ENCODE measurements at regions of chr11 and their contacts with region 1.

Region 1: GRCh38 chr11:118870396-118871345 is 13.0 kb upstream of the CXCR5 start:
- DNase-seq: peak; percentile 66
- ATAC-seq: peak; percentile 37
- H3K4me3 Mint-ChIP-seq: peak overlapping the region; percentile 51
- H3K27ac Mint-ChIP-seq: peak overlapping the region; percentile 92
- H3K4me1 Mint-ChIP-seq: peaks cover 55% of the 10 kb centered on the region
- H3K27me3 Mint-ChIP-seq: no peaks in the 10 kb centered on the region

Region 2: GRCh38 chr11:118845369-118845768 is 25.3 kb before region 1 on chr11:
- CTCF ChIA-PET with region 1: interaction called, 11 read pairs
- DNase-seq: peak; percentile 50
- ATAC-seq: peak; percentile 55
- H3K4me3 Mint-ChIP-seq: no peak overlapping the region
- H3K27ac Mint-ChIP-seq: peak overlapping the region; percentile 74
- H3K4me1 Mint-ChIP-seq: peaks cover 35% of the 10 kb centered on the region
- H3K27me3 Mint-ChIP-seq: peaks cover 2% of the 10 kb centered on the region

Region 3: GRCh38 chr11:118885319-118885718 is 14.6 kb after region 1 on chr11:
- CTCF ChIA-PET with region 1: no interaction called
- DNase-seq: no peak
- ATAC-seq: no peak
- H3K4me3 Mint-ChIP-seq: no peak overlapping the region
- H3K27ac Mint-ChIP-seq: no peak overlapping the region
- H3K4me1 Mint-ChIP-seq: peaks cover 19% of the 10 kb centered on the region
- H3K27me3 Mint-ChIP-seq: peaks cover 11% of the 10 kb centered on the region

Region 4: GRCh38 chr11:118895142-118896039 is 24.7 kb after region 1 on chr11:
- CTCF ChIA-PET with region 1: interaction called, 15 read pairs
- DNase-seq: peak; percentile 68
- ATAC-seq: peak; percentile 60
- H3K4me3 Mint-ChIP-seq: no peak overlapping the region
- H3K27ac Mint-ChIP-seq: peak overlapping the region; percentile 73
- H3K4me1 Mint-ChIP-seq: peaks cover 41% of the 10 kb centered on the region
- H3K27me3 Mint-ChIP-seq: no peaks in the 10 kb centered on the region

Region 5: DNA sequence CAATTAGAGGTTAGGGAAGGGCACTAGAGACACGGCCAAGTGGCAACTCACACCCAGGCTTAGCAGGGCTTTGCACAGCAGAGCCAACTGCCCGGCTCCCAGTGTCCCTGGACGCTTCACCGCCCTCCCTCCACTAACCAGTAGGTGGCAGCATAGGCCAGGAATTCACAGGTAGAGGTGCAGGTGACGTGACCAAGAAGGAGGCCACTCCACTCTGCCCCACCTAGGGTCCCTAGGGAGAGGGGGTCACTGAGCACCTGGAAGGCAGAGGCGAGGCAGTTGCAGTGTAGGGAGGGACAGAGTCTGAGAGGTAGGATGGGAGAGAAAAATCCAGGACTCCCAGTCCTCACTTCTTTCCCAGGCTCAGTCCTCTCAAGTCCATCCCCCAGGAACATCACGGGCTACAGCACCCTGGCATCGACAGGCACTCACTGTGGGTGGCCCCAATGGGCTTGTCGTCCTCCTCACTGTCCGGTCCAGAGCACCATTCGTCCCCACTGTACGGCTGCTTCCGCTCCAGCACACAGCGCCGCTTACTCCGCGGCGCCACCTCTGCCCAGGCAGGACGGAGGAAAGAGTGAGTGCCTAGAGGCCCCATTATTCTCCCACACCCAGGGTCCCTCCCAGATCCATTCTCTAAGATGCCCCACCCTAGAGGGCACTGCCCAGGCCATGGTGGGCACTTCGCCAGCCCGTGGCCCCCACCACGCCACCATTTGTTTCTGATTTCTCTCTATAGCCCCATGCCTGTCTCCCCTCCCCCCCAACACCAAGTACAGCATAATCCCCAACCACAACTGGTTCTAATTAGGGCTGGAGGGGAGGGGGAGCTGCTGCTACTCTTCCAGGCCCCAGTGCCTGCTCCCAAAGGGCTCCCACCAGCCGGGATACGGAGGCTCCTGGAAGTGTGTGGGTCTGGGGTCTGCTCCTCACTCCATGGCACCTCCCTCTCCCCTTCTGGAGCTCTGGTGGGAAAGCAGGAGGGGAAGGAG is 36.7 kb after region 1 on chr11:
- CTCF ChIA-PET with region 1: interaction called, 13 read pairs
- DNase-seq: peak; percentile 91
- ATAC-seq: peak; percentile 79
- H3K4me3 Mint-ChIP-seq: no peak overlapping the region
- H3K27ac Mint-ChIP-seq: no peak overlapping the region
- H3K4me1 Mint-ChIP-seq: peaks cover 27% of the 10 kb centered on the region
- H3K27me3 Mint-ChIP-seq: no peaks in the 10 kb centered on the region

Region 6: DNA sequence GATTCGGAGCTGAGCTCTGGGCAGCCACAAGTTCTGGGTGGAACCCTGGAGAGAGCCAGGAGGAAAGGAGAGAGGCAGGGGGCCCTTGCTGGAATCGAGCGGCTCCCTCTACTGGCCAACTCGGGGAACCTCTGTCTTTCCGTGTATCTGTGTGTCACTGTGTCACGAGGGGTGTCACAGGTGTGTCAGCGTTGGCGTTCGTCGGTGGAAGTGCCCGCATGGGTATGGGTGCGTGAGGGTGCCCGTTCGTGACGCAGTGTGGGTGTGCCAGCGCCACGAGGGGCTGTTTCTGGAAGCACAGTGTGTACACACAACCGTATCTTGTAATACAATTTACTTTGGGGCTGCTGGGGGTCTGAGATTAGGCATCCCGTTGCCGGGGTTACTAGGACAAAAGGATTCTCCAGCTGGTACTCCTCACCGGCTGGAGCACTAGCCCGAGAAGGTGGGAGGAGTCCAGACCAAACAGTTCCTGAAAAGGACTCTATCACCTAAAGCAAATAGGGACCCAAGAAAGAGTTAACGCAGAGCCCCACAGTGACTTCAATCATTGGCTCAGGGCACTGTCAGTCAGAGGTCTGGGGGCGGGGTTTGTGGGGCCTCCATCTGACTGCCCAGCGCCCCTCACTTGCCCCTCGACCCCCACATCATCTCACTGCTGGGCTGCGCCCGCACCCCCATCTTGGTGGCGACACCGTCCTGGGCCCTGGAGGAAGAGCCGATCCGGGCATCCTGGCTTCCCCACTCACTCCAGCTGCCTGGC is 57.6 kb after region 1 on chr11:
- CTCF ChIA-PET with region 1: interaction called, 17 read pairs
- DNase-seq: peak; percentile 94
- ATAC-seq: peak; percentile 60
- H3K4me3 Mint-ChIP-seq: peak overlapping the region; percentile 92
- H3K27ac Mint-ChIP-seq: peak overlapping the region; percentile 98
- H3K4me1 Mint-ChIP-seq: peaks cover 44% of the 10 kb centered on the region
- H3K27me3 Mint-ChIP-seq: no peaks in the 10 kb centered on the region

Region 7: GRCh38 chr11:118953265-118953664 is 82.6 kb after region 1 on chr11:
- CTCF ChIA-PET with region 1: no interaction called
- DNase-seq: no peak
- ATAC-seq: no peak
- H3K4me3 Mint-ChIP-seq: no peak overlapping the region
- H3K27ac Mint-ChIP-seq: no peak overlapping the region
- H3K4me1 Mint-ChIP-seq: no peaks in the 10 kb centered on the region
- H3K27me3 Mint-ChIP-seq: peaks cover 2% of the 10 kb centered on the region

Region 8: GRCh38 chr11:119168471-119169281 is 298.0 kb after region 1 on chr11 and contains the start of gene NLRX1:
- CTCF ChIA-PET with region 1: no interaction called
- DNase-seq: peak; percentile 91
- ATAC-seq: peak; percentile 95
- H3K4me3 Mint-ChIP-seq: peak within 1 kb of the TSS; percentile 85
- H3K27ac Mint-ChIP-seq: peak within 1 kb of the TSS; percentile 91
- H3K4me1 Mint-ChIP-seq: peaks cover 20% of the 10 kb centered on the region
- H3K27me3 Mint-ChIP-seq: no peaks in the 10 kb centered on the region
- total RNA-seq, gene NLRX1: 21.2 to 22.2 TPM